Activated T-helper 1 cell treated with anti-CD3 and anti-CD28 coated beads, Interleukin-12 subunit alpha, Interleukin-12 subunit beta, Interleukin-2, Interleukin-4 antibody, amounts not matched to agents 30 ng/mL and 10 ng/mL and 1 ng/mL, durations not matched to agents 14 hours and 24 hours and 36 hours (primary cell): ENCODE measurements at regions of chr16 and their contacts with region 1.

Region 1: DNA sequence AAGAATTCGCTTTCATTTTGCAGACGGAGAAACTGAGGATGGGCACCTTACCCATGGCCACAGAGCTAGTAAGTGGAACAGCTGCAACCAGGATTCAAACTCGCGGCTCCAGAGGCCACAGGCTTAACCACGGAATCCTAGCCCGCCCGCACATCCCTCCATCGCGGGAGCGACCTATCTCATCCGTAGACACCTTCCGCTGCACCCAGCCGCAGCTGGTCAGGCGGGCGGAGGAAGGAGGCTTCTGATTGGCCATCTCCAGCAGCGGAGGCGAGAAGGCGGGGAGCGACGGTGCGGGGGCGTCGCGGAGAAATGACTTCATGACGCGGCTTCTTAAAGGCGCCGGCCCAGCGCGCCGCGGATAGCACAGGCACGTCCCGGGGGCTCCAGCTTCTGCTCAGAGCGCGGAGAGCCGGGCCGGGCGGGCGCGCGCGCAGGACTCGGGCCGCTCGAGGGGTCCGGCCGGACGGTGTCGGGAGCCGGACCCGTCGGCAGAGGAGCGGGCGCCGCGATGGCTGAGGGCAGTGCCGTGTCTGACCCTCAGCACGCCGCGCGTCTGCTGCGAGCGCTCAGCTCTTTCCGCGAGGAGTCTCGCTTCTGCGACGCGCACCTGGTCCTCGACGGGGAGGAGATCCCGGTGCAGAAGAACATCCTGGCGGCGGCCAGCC is at the start of gene GAN:
- DNase-seq: peak; percentile 95
- H3K4me3 Mint-ChIP-seq: peak within 1 kb of the TSS; percentile 90
- H3K27ac Mint-ChIP-seq: peak within 1 kb of the TSS; percentile 83
- H3K4me1 Mint-ChIP-seq: peaks cover 76% of the 10 kb centered on the region
- H3K27me3 Mint-ChIP-seq: no peaks in the 10 kb centered on the region
- total RNA-seq, gene GAN: 16.4 and 16.8 TPM in 2 replicates

Region 2: DNA sequence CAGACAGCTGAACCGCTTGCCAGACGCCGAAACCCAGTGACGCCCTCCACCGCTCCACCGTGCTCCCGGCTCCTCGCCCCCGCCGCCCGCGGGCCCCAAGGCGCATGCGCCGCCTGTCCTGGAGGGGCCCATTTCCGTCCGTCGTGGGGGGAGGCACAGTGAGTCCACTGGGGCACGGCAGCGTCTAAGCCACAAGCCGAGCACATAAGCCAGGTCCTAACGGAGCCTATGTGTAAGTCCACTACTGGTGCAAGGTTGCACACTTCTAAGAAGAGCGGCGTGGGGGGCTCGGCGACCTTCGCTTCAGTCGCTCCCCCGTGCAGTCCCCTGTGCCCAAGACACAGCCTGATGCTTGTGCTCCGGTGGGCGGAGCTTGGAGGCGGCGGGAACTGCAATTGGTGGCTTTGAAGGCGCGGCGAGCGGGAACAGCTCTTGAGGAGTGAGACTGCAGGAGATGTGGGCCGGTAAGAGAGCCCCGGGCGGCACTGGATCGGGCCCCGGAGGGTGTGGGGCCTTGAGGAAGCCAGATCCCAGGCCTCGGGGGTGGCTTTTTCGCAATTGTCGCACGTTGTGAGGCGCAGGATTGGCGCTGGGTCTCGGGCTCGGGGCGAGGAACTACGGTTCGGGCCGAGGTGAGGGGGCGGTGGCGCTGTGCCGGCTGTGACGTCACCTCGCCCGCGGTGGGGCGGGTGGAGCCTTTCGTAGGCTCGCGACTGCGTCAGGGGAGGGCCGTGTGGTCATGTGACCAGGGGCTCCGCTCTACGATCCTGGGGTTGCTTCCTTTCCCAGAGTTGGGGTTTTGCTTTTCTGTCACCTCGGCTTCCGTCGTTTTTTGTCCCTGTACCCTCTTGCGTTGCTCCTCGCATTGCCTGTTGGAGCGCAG is 307.7 kb before region 1 on chr16 and contains the starts of genes CENPN and CMC2:
- intact Hi-C with region 1: loop called (anchors 1 kb)
- DNase-seq: peak; percentile 97
- H3K4me3 Mint-ChIP-seq: peak within 1 kb of the TSS; percentile 100
- H3K27ac Mint-ChIP-seq: peak within 1 kb of the TSS; percentile 100
- H3K4me1 Mint-ChIP-seq: peaks cover 61% of the 10 kb centered on the region
- H3K27me3 Mint-ChIP-seq: peaks cover 2% of the 10 kb centered on the region
- total RNA-seq, gene CENPN: 65.6 and 67.8 TPM in 2 replicates
- total RNA-seq, gene CMC2: 141 and 156 TPM in 2 replicates

Region 3: GRCh38 chr16:81095953-81096717 is 218.6 kb before region 1 on chr16 and contains the start of gene GCSH:
- intact Hi-C with region 1: loop called (anchors 1 kb)
- DNase-seq: peak; percentile 99
- H3K4me3 Mint-ChIP-seq: peak within 1 kb of the TSS; percentile 81
- H3K27ac Mint-ChIP-seq: peak within 1 kb of the TSS; percentile 46
- H3K4me1 Mint-ChIP-seq: peaks cover 6% of the 10 kb centered on the region
- H3K27me3 Mint-ChIP-seq: peaks cover 3% of the 10 kb centered on the region
- total RNA-seq, gene GCSH: 16.5 and 19.1 TPM in 2 replicates

Region 4: GRCh38 chr16:81136390-81137342 is 178.1 kb before region 1 on chr16:
- intact Hi-C with region 1: no loop called
- DNase-seq: no peak
- H3K4me3 Mint-ChIP-seq: no peak overlapping the region
- H3K27ac Mint-ChIP-seq: no peak overlapping the region
- H3K4me1 Mint-ChIP-seq: no peaks in the 10 kb centered on the region
- H3K27me3 Mint-ChIP-seq: no peaks in the 10 kb centered on the region

Region 5: DNA sequence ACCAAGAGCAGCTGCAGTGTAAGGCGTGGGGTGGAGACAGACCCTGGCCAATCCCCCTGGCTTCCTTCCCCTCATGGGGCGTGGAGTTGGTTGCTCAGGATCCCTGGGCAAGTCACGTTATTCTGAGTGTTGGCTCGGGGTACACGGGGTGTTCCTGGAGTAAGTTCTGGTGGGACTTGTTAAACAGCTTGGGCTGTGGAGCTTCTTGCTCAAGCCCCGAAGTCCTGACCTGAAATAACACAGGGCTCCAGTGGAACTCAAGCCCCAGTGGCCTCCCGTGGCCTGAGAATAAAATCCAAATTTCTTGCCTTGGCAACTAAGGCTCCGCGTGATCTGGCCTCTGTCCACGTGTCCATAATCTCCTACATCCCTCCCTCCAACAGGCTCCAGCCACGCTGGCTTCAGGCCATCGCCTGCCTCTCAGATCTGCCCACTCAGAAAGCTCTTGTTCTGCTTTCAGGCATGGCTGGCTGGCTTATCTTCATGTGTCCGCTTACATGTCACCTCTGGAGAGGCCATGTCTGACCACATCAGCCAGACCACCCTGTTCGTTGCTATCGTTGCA is 125.6 kb before region 1 on chr16:
- intact Hi-C with region 1: no loop called
- DNase-seq: no peak
- H3K4me3 Mint-ChIP-seq: no peak overlapping the region
- H3K27ac Mint-ChIP-seq: no peak overlapping the region
- H3K4me1 Mint-ChIP-seq: no peaks in the 10 kb centered on the region
- H3K27me3 Mint-ChIP-seq: no peaks in the 10 kb centered on the region

Region 6: GRCh38 chr16:81349996-81350618 is 35.4 kb after region 1 on chr16:
- intact Hi-C with region 1: loop called (anchors 5 kb)
- DNase-seq: no peak
- H3K4me3 Mint-ChIP-seq: no peak overlapping the region
- H3K27ac Mint-ChIP-seq: no peak overlapping the region
- H3K4me1 Mint-ChIP-seq: peaks cover 10% of the 10 kb centered on the region
- H3K27me3 Mint-ChIP-seq: no peaks in the 10 kb centered on the region

Region 7: DNA sequence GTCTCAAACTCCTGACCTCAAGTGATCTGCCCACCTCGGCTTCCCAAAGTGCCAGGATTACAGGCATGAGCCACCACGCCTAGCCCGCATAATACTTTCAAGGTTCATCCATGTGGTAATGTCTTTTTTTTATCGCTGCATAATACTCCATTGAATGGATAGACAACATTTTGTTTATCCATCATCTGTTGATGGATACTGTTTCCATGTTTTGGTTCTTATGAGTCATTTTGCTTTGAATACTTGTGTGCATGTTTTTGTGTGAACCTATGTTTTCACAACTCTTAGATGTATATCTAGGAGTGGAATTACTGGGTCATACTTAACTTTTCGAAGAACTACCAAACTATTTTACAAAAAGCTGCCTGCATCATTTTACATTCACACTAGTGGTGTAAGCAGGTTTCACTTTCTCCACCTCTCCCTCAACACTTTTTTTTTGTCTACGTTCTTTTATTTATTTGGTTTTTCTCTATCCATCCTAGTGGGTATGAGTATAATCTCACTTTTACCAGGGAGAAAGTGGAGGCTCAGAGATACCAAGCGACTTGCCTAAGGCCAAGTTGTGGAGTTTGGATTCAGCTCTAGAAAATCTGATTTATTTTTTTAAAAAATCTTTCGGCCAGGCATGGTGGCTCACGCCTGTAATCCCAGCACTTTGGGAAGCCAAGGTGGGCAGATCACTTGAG is 281.0 kb after region 1 on chr16:
- intact Hi-C with region 1: loop called (anchors 1 kb)
- DNase-seq: no peak
- H3K4me3 Mint-ChIP-seq: no peak overlapping the region
- H3K27ac Mint-ChIP-seq: peak overlapping the region; percentile 87
- H3K4me1 Mint-ChIP-seq: peaks cover 35% of the 10 kb centered on the region
- H3K27me3 Mint-ChIP-seq: no peaks in the 10 kb centered on the region

Region 8: DNA sequence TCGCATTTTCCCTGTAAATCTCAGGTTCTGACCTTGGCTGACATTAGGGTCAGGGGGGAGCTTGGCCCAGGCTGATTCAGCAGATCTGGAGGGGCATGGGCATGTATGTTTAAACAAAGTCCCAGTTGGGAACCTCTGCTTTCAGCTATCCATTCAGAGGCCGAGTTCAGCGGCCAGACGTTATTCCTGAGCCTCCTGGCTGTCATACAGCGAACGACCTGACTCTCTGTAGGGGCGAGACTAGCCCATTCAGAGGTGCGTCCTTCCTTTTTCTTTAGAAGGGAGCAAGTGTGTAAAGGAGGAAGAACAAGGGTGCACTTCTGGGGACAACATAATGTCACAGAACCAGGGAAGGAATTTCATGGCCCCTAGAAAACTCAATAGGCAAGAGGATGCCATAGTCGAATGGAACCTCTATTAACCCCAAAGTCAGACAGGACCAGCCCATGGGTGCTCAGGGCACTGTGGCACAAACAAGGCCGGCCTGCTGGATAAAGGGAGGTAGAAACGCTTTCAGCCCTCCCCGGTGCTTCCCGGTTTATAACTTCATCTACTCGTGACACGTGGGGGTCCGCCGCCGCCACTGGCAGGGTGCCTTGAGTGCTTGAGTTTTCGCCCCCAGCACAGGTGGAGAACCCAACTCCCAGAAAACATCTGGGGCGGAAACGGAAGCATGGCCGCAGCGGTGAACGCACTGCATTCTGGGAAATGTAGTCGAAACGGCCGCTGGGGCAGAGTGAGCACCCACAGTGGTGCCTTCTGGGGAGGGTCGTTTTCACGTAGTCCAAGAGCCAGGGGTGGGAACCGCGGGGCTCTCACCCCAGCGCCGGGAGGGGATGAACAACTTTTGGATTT is 431.2 kb after region 1 on chr16:
- intact Hi-C with region 1: loop called (anchors 5 kb)
- DNase-seq: peak; percentile 65
- H3K4me3 Mint-ChIP-seq: peak overlapping the region; percentile 58
- H3K27ac Mint-ChIP-seq: peak overlapping the region; percentile 81
- H3K4me1 Mint-ChIP-seq: peaks cover 35% of the 10 kb centered on the region
- H3K27me3 Mint-ChIP-seq: no peaks in the 10 kb centered on the region